Mammary epithelial cell (primary cell): ENCODE measurements at regions of chr3 and their contacts with region 1.

Region 1: GRCh38 chr3:188830893-188831292 is 340.9 kb upstream of the TPRG1 start:
- DNase-seq: no peak
- H3K4me3 ChIP-seq: no peak overlapping the region
- H3K27ac ChIP-seq: no peak overlapping the region
- H3K4me1 ChIP-seq: peaks cover 14% of the 10 kb centered on the region
- H3K27me3 ChIP-seq: no peaks in the 10 kb centered on the region
- CTCF ChIP-seq: peak; percentile 36 to 43

Region 2: GRCh38 chr3:188154014-188154808 is 676.7 kb before region 1 on chr3 and contains the start of gene LPP:
- CTCF ChIA-PET with region 1: no interaction called
- dilution Hi-C with region 1: no loop called
- in situ Hi-C with region 1: no loop called
- intact Hi-C with region 1: loop called (anchors 10 kb)
- DNase-seq: peak; percentile 85
- H3K4me3 ChIP-seq: peak within 1 kb of the TSS; percentile 43 to 77 (median 66)
- H3K27ac ChIP-seq: peak within 1 kb of the TSS; percentile 94
- H3K4me1 ChIP-seq: peaks cover 32% of the 10 kb centered on the region
- H3K27me3 ChIP-seq: no peaks in the 10 kb centered on the region
- CTCF ChIP-seq: no peak
- total RNA-seq, gene LPP: 66.8 to 109 TPM

Region 3: DNA sequence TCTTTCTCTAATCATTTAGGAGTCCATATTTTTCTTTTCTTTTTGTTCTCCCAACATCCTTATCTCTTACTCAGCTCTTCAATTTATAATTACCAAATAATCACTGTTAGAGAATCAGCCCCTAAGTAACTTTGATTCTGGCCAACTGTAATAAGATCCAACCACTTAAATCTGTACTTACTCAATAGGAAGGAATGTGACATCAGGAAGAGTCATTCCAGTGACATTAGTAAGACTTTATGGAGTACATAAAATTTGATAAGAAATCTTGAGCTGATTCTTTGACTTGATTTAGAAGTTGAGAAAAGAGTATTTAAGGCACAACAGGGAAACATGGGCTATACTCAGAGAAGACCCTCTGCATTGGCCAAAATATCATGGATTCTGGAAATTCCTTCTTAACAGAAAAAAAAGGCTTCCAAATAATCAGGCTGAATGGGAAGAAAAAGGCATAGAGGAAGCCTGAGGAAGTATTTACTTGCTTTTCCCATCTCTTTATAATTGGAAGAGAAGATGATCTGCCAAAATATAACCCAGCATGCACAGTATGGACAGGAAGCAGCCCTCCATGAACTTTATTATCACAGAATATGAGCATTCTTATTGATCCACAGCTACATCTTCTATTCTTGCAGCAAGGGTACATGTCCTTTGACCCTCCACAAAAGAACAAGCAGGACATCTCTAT is 51.2 kb after region 1 on chr3:
- CTCF ChIA-PET with region 1: no interaction called
- dilution Hi-C with region 1: no loop called
- in situ Hi-C with region 1: no loop called
- intact Hi-C with region 1: loop called (anchors 1 kb)
- DNase-seq: peak; percentile 62
- H3K4me3 ChIP-seq: no peak overlapping the region
- H3K27ac ChIP-seq: no peak overlapping the region
- H3K4me1 ChIP-seq: peaks cover 16% of the 10 kb centered on the region
- H3K27me3 ChIP-seq: no peaks in the 10 kb centered on the region
- CTCF ChIP-seq: no peak

Region 4: DNA sequence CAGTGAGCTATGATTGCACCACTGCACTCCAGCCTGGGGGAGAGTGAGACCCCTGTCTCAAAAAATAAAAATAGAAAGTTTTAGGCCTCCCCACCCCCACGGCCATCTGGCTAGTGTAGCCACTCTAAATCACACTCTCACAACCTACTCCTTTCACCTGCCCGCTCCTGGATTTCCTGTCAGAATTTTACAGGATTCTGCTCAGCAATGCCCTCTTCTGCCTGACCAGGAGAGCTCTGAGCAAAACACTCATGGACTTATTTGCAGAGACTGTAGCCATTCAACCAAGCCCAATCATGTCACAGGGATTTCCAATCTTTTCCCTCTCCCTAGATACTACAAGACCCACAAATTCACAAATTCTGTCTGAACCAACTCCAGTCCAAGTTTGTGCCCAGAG is 98.2 kb after region 1 on chr3:
- CTCF ChIA-PET with region 1: no interaction called
- dilution Hi-C with region 1: no loop called
- in situ Hi-C with region 1: no loop called
- intact Hi-C with region 1: loop called (anchors 1 kb)
- DNase-seq: peak; percentile 21
- H3K4me3 ChIP-seq: no peak overlapping the region
- H3K27ac ChIP-seq: no peak overlapping the region
- H3K4me1 ChIP-seq: peaks cover 2% of the 10 kb centered on the region
- H3K27me3 ChIP-seq: no peaks in the 10 kb centered on the region
- CTCF ChIP-seq: peak; percentile 5 to 55

Region 5: GRCh38 chr3:189233225-189233858 is 402.4 kb after region 1 on chr3:
- CTCF ChIA-PET with region 1: no interaction called
- dilution Hi-C with region 1: no loop called
- in situ Hi-C with region 1: no loop called
- intact Hi-C with region 1: loop called (anchors 5 kb)
- DNase-seq: peak; percentile 58
- H3K4me3 ChIP-seq: no peak overlapping the region
- H3K27ac ChIP-seq: no peak overlapping the region
- H3K4me1 ChIP-seq: no peaks in the 10 kb centered on the region
- H3K27me3 ChIP-seq: no peaks in the 10 kb centered on the region
- CTCF ChIP-seq: peak; percentile 80 to 90